RWPE1 (cell line): ENCODE measurements at regions of chr3 and their contacts with region 1.

Region 1: DNA sequence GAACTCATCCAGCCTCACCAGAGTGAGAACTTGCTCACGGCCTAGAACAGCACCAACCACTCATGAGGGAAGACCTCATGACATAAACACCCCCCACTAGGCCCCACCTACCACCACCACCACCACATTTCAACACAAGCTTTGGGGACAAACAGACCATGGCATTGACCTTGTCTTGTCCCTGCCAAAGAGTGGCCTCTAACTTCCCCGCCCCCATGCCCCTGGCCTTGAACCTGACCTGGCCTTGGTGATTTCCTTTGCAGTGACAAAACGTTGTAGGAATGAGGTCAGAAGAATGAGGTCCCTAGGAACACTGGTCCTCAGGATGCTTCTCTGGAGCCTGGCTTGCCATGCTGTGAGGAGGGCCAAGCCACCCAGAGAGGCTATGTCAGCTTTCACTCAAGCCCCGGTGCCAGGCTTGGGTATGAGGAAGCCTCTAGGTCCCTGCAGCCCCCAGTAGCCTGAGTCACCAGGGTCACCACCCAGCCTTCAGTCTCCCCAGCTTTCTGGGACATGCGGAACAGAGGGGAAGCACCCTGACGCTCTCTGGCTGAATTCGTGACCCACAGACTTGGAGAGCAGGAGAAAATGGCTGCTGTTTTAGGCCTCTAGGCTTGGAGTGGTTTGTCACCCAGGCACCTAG is 57.9 kb downstream of the TPRA1 start:
- DNase-seq: no peak
- H3K27ac ChIP-seq: no peak overlapping the region
- CTCF ChIP-seq: no peak

Region 2: DNA sequence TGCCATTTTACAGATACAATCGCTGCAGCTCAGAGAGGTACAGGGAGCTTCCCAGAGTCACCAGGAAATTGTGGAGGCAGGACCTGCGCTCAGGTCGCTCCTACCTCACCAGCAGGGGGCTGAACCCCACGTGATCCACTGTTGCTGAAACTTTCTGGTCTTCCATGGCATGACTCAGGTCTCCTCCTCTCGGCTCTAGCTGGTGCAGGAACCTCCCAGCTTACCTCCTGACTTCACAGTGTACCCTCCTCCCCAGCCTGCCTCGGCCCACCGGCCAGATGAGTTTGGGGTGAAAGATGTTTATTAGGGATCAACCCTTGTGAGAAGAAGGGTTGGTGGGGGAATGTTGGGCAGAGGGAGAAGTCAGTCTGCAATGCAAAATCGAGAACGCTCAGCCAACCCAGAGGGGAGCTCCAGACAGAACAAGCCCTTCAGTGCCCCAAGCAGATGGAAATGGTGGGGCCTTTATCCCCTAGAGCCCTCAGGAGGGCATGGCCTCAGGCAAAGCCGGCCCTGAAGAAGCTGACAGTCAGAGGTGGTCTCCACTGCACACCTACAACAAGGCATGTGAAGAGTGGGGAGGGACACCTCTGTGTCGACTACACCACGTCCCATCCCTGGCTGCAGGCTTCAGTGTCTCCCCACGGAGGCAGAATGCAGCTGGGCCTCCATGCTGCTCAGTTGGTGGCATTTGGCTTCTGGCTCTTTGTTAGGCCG is 126.2 kb before region 1 on chr3:
- CTCF ChIA-PET with region 1: interaction called, 10 read pairs
- POLR2A ChIA-PET with region 1: no interaction called
- DNase-seq: peak; percentile 52
- H3K27ac ChIP-seq: no peak overlapping the region
- CTCF ChIP-seq: no peak

Region 3: GRCh38 chr3:127520982-127521381 is 11.7 kb before region 1 on chr3:
- CTCF ChIA-PET with region 1: no interaction called
- POLR2A ChIA-PET with region 1: no interaction called
- DNase-seq: no peak
- H3K27ac ChIP-seq: no peak overlapping the region
- CTCF ChIP-seq: no peak

Region 4: DNA sequence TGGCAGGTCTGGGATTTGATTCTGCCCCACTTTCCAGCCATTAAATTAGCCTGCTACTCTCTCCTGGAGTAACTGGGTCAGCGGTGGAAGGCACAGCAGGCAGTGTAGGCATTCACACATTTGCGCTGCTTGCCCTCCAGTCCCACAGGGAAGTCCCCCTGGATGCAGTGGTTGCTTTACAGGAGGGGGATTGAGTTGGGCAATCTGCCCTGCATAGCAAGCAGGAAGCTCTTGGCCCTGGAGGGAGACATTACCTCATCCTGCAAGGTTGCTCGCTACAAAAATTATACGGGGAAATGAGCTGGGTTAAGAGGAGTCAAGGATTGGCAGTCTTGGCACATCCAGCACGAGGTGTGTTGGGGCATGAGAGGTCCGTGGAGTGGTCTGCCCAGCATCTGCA is 80.3 kb after region 1 on chr3:
- CTCF ChIA-PET with region 1: no interaction called
- POLR2A ChIA-PET with region 1: no interaction called
- DNase-seq: no peak
- H3K27ac ChIP-seq: peak overlapping the region; percentile 37
- CTCF ChIP-seq: no peak